Activated T-helper 2 cell treated with anti-CD3 and anti-CD28 coated beads, Interferon-gamma antibody, Interleukin-2, Interleukin-4, amounts not matched to agents 10 μg/mL and 5 μg/mL and 100 μg/mL, durations not matched to agents 14 hours and 24 hours and 36 hours (primary cell): ENCODE measurements at regions of chr12 and their contacts with region 1.

Region 1: GRCh38 chr12:50763639-50764285 is at the start of gene ATF1:
- DNase-seq: peak; percentile 89
- H3K4me3 Mint-ChIP-seq: peak within 1 kb of the TSS; percentile 98
- H3K27ac Mint-ChIP-seq: peak within 1 kb of the TSS; percentile 97
- H3K4me1 Mint-ChIP-seq: peaks cover 23% of the 10 kb centered on the region
- H3K27me3 Mint-ChIP-seq: no peaks in the 10 kb centered on the region
- total RNA-seq, gene ATF1: 58.8 and 63.0 TPM in 2 replicates

Region 2: DNA sequence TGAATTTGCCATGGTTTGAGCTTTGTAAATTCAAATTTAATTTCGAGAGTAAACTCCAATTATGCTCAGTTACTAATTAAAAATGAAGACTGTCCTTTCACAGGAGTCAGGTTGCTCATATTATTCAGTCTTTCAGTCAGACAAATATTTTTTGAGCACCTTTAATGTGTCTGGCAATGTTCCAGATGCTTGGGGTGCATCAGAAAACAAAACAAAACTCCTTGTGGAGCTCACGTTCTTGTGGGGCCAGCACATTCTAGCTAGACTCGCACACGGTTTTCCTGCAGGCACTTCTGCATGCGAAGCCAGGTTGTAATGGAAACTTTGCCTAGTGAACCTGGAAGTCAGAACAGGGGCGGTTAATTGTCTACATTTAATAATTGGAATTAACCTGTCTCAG is 63.8 kb before region 1 on chr12:
- intact Hi-C with region 1: no loop called
- DNase-seq: no peak
- H3K4me3 Mint-ChIP-seq: no peak overlapping the region
- H3K27ac Mint-ChIP-seq: no peak overlapping the region
- H3K4me1 Mint-ChIP-seq: no peaks in the 10 kb centered on the region
- H3K27me3 Mint-ChIP-seq: no peaks in the 10 kb centered on the region

Region 3: DNA sequence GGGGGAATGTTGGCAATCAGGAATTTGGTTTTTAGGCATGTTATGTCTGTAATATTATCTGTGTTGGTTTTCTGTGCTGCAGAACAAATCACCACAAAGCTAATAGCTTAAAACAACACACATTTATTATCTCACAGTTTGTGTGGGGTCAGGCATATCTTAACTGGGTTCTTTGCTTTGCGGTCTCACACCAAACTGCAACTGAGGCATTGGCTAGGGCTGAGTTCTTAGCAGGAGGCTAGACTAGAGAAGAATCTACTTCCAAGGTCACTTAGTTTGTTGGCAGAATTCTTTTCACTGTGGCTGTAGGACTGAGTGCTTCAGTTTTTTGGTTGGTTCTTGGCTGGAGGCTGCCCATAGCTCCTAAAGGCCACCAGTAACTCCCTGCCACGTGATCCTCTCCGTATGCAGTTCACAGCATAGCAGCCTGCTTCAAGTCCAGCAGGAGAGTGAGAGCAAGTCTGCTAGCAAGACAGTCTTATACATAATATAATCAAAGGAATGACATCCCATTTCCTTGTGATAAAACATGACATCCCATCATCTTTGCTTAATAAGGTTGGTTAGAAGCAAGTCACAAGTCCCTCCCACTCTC is 21.7 kb after region 1 on chr12:
- intact Hi-C with region 1: loop called (anchors 2 kb)
- DNase-seq: no peak
- H3K4me3 Mint-ChIP-seq: no peak overlapping the region
- H3K27ac Mint-ChIP-seq: no peak overlapping the region
- H3K4me1 Mint-ChIP-seq: peaks cover 9% of the 10 kb centered on the region
- H3K27me3 Mint-ChIP-seq: no peaks in the 10 kb centered on the region

Region 4: DNA sequence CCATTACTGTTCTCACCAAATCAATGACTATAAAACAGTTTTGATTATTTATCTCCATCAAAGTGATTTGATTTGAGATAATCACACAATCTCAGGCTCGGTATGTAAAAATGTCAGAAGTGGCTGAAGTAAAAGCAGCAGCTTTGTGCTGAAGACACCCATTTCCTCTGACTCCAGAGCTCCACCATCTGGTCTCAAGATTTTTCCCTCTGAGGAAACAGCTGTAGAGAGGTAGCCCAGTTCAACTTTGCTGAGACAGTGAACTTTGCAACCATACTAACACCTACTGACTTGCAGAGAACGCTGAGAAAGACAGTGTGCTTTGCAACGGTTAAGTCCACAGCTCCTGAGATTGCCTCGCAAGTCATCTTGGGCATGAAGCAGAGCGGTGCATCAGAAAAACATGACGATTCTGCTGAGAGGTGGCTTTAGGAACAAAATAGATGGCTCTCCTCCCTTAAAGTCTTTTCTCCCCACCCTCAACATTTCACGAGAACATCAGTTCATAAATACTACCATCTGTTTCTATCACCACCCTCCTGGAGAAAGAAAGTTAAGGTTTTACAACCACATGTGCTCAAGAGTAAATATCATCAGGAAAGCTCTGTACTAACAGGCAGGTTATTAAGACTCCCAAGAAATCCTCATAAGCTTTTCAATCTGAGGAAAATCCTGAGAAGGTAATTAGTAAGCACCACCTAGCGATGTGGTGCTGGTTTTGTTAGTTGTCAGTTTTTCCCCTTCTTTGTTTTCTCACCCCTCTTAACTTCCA is 223.4 kb after region 1 on chr12:
- intact Hi-C with region 1: loop called (anchors 2 kb)
- DNase-seq: no peak
- H3K4me3 Mint-ChIP-seq: no peak overlapping the region
- H3K27ac Mint-ChIP-seq: peak overlapping the region; percentile 24
- H3K4me1 Mint-ChIP-seq: peaks cover 31% of the 10 kb centered on the region
- H3K27me3 Mint-ChIP-seq: no peaks in the 10 kb centered on the region

Region 5: DNA sequence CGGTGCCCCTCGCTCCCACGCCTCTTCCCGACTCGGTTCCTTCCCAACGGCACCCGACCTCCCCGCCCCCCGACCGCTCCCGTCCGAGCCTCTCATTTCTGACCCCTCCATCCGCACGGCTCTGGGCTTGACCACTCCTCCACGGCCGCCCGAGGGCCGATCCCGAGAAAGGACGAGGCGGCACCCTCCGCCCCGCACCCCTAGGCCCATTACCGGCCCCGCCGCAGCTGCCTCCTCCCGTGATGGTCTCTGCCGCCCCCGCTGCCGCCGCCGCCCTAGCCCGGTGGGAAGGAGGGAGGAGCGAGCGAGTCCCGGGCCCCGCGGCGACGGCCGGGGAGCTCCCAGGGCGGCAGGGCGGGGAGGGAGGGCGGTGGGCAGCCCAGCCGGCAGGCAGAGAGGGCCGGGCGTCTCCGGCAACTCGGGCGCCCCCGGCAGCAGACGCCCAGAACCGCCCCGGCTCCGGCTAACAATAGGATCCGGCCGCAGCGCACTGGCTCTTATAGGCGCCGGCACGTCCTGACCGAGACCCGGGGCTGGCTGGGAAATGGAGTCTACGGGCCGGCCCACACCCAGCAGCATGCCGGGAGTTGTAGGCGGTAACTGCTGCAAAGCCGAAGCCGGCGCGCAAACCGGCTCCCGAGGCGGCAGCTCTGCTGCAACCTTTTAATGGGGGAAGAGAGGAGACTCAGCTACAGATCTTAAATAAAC is 319.5 kb after region 1 on chr12 and contains the start of gene CSRNP2:
- intact Hi-C with region 1: loop called (anchors 10 kb)
- DNase-seq: peak; percentile 94
- H3K4me3 Mint-ChIP-seq: peak within 1 kb of the TSS; percentile 98
- H3K27ac Mint-ChIP-seq: peak within 1 kb of the TSS; percentile 90
- H3K4me1 Mint-ChIP-seq: peaks cover 38% of the 10 kb centered on the region
- H3K27me3 Mint-ChIP-seq: no peaks in the 10 kb centered on the region
- total RNA-seq, gene CSRNP2: 28.3 and 31.2 TPM in 2 replicates